ENCODE measurements at regions of chr1 and their contacts with region 1.

Region 1: DNA sequence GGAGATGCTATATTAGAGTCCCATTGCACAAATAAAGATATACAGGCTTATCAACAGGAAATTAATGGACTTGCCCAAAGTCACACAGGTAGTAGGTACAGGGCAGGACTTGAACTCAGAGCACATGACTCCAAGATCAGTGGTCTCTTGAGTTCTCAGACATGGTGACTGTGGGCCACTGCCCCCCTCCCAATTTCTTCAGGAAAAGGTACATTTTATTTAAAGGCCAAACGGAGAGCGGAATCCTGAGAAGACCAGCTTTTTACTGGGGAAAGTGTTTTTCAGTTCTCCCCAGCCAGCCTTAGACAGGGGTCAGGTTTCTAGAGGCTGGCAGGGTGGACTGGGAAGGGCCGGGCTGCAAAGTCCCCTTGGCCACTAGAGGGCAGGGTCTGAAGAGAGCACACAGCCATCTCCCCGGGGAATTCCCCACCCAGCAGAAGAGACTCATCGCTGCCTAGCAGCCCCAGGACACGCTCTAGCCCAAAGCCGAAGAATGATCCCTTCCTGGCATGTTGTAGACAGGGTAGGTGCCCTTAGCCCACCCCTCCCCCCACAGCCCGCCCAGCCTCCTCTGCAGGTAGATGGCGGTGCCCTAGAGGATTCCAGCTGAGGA is 29.7 kb downstream of the ACP6 start:
- DNase-seq: peak; percentile 89
- H3K4me3 Mint-ChIP-seq: no peak overlapping the region
- H3K27ac Mint-ChIP-seq: no peak overlapping the region
- H3K4me1 Mint-ChIP-seq: peaks cover 11% of the 10 kb centered on the region
- H3K27me3 Mint-ChIP-seq: no peaks in the 10 kb centered on the region

Region 2: GRCh38 chr1:147273409-147274336 is 367.0 kb before region 1 on chr1:
- CTCF ChIA-PET with region 1: interaction called, 3 read pairs
- intact Hi-C with region 1: loop called (anchors 5 kb)
- DNase-seq: peak; percentile 42
- H3K4me3 Mint-ChIP-seq: no peak overlapping the region
- H3K27ac Mint-ChIP-seq: no peak overlapping the region
- H3K4me1 Mint-ChIP-seq: peaks cover 6% of the 10 kb centered on the region
- H3K27me3 Mint-ChIP-seq: no peaks in the 10 kb centered on the region

Region 3: GRCh38 chr1:147494998-147495580 is 145.6 kb before region 1 on chr1:
- CTCF ChIA-PET with region 1: interaction called, 13 read pairs
- intact Hi-C with region 1: loop called (anchors 1 kb)
- DNase-seq: peak; percentile 82
- H3K4me3 Mint-ChIP-seq: no peak overlapping the region
- H3K27ac Mint-ChIP-seq: no peak overlapping the region
- H3K4me1 Mint-ChIP-seq: no peaks in the 10 kb centered on the region
- H3K27me3 Mint-ChIP-seq: no peaks in the 10 kb centered on the region

Region 4: GRCh38 chr1:147515046-147515869 is 125.4 kb before region 1 on chr1:
- CTCF ChIA-PET with region 1: interaction called, 34 read pairs
- intact Hi-C with region 1: loop called (anchors 1 kb)
- DNase-seq: peak; percentile 24
- H3K4me3 Mint-ChIP-seq: no peak overlapping the region
- H3K27ac Mint-ChIP-seq: no peak overlapping the region
- H3K4me1 Mint-ChIP-seq: peaks cover 12% of the 10 kb centered on the region
- H3K27me3 Mint-ChIP-seq: peaks cover 4% of the 10 kb centered on the region

Region 5: DNA sequence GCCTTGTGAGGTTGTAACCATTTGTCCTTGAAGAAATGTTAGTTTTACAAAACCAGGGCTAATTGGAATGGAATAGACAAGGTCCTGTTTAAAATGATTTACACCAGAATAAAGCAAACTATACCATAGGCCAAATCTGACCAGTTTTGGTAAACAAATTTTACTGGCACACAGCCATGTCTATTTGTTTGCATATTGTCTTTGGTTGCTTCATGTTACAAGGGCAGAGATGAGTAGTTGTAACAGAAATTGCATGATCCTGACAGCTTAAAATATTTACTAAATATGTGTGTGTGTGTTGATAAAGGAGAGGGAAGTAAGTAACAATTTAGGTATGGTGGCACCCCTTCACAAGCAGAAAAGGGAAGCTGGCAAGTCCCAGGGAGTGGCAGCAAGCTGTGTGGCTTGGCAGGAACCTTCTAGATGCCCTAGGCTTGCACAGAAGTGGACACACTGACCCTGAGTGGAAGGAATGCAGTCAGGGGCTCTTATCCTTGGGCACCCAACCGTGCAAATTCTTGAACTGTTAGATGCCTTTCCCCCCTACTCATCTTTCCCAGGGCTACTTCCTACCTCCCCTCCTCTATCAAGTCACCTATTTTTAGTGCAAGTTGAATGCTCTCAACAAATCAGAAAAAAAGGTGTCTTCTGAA is 10.7 kb after region 1 on chr1:
- CTCF ChIA-PET with region 1: interaction called, 10 read pairs
- intact Hi-C with region 1: no loop called
- DNase-seq: no peak
- H3K4me3 Mint-ChIP-seq: no peak overlapping the region
- H3K27ac Mint-ChIP-seq: no peak overlapping the region
- H3K4me1 Mint-ChIP-seq: peaks cover 28% of the 10 kb centered on the region
- H3K27me3 Mint-ChIP-seq: no peaks in the 10 kb centered on the region

Region 6: GRCh38 chr1:147700042-147701006 is 59.7 kb after region 1 on chr1:
- CTCF ChIA-PET with region 1: no interaction called
- intact Hi-C with region 1: loop called (anchors 5 kb)
- DNase-seq: peak; percentile 78
- H3K4me3 Mint-ChIP-seq: no peak overlapping the region
- H3K27ac Mint-ChIP-seq: no peak overlapping the region
- H3K4me1 Mint-ChIP-seq: peaks cover 6% of the 10 kb centered on the region
- H3K27me3 Mint-ChIP-seq: no peaks in the 10 kb centered on the region

Region 7: DNA sequence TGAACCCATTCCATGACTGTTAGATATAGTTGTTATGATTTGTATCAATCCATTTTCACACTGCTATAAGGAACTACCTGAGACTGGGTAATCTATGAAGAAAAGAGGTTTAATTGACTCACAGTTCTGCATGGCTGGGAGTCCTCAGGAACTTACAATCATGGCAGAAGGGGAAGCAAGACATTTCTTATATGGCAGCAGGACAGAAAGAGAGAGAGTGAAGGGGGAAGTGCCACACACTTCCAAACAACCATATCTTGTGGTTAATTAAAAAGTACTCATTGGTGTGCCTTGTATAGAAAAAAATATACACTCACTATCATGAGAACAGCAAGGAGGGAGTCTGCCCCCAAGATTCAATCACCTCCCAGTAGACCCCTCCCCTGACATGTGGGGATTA is 649.0 kb after region 1 on chr1:
- CTCF ChIA-PET with region 1: no interaction called
- intact Hi-C with region 1: no loop called
- DNase-seq: no peak
- H3K4me3 Mint-ChIP-seq: no peak overlapping the region
- H3K27ac Mint-ChIP-seq: no peak overlapping the region
- H3K4me1 Mint-ChIP-seq: peaks cover 5% of the 10 kb centered on the region
- H3K27me3 Mint-ChIP-seq: peaks cover 2% of the 10 kb centered on the region